SK-N-SH (cell line): ENCODE measurements at regions of chr21 and their contacts with region 1.

Region 1: GRCh38 chr21:33360881-33361602 is 36.3 kb downstream of the IFNAR1 start:
- DNase-seq: peak; percentile 71
- H3K4me3 ChIP-seq: peak overlapping the region; percentile 21 to 29; a peak in 2 of 4 replicates
- H3K27ac ChIP-seq: peak overlapping the region; percentile 56 to 87; a peak in 3 of 4 replicates
- H3K4me1 ChIP-seq: peaks cover 14% of the 10 kb centered on the region in 2 experiments; a peak in 3 of 4 replicates
- H3K27me3 ChIP-seq: no peaks in the 10 kb centered on the region
- CTCF ChIP-seq: peak; percentile 92
- EP300 ChIP-seq: peak in 1 of 2 experiments; percentile 22; a peak in 1 of 4 replicates
- RAD21 ChIP-seq: peak; percentile 63

Region 2: DNA sequence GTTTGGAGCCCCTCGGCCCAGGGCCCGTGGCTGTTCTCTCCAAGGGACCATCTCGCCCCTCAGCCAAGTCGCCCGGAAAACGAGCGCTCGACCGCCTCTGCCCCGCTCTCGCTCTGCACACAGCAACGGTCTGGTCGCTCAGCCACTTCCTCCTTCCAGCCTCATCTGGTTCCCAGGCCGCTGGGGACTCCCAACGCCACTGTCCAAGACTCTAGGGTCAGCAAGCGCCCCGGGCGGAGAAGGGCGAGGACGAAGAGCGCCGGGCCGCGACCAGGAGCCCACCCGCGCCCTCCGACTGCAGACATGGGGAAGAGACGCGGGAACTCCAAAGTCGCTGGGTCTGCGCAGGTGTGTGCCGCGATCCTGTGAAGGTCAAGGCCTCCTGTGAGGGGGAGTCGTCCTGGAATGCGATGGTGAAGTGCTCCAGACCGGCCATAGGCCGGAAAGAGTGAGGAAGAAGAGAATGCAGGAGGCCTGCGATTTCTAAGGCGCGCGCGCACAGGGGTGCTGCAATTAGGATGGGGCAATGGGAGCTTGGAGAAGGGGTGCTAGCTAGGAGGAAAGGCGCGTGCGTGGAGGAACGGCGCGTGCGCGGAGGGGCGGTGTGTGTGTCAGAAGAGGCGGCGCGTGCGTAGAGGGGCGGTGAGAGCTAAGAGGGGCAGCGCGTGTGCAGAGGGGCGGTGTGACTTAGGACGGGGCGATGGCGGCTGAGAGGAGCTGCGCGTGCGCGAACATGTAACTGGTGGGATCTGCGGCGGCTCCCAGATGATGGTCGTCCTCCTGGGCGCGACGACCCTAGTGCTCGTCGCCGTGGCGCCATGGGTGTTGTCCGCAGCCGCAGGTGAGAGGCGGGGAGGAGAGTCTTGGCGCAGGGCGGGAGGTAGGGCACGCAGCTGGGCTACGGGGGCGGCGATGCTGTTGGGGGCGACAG is 36.5 kb before region 1 on chr21 and contains the start of gene IFNAR1:
- CTCF ChIA-PET with region 1: interaction called, 14 read pairs
- POLR2A ChIA-PET with region 1: interaction called, 4 read pairs
- DNase-seq: peak; percentile 99
- H3K4me3 ChIP-seq: peak within 1 kb of the TSS; percentile 68 to 97
- H3K27ac ChIP-seq: peak within 1 kb of the TSS; percentile 87 to 90
- H3K4me1 ChIP-seq: peaks cover 3 to 12% of the 10 kb centered on the region in 2 experiments; a peak in 1 of 4 replicates
- H3K27me3 ChIP-seq: no peaks in the 10 kb centered on the region
- CTCF ChIP-seq: peak; percentile 14; the same call in 1 of the 2 replicates
- EP300 ChIP-seq: no peak
- RAD21 ChIP-seq: peak; percentile 4; the same call in 1 of the 2 replicates
- polyA plus RNA-seq, gene IFNAR1: 7.9 and 12.2 TPM in 2 replicates

Region 3: DNA sequence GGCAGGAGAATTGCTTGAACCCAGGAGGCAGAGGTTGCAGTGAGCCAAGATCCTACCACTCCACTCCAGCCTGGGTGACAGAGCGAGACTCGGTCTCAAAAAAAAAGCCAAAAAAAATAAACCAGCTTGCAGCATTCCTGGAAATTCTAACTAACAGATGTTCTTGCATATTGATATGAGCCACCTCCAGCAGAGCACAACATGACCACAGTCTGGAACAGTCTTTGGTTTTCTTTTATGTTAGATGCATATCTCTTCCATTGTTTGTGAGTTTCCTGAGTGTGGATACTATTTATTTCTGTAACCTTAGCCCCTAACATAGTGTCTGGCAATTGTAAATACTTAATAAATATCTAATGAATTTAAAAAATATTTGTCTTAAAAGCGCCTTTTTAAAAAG is 12.3 kb before region 1 on chr21:
- CTCF ChIA-PET with region 1: interaction called, 64 read pairs
- POLR2A ChIA-PET with region 1: no interaction called
- DNase-seq: no peak
- H3K4me3 ChIP-seq: no peak overlapping the region
- H3K27ac ChIP-seq: no peak overlapping the region
- H3K4me1 ChIP-seq: no peaks in the 10 kb centered on the region
- H3K27me3 ChIP-seq: no peaks in the 10 kb centered on the region
- CTCF ChIP-seq: no peak
- EP300 ChIP-seq: no peak
- RAD21 ChIP-seq: no peak

Region 4: GRCh38 chr21:33394260-33394659 is 33.2 kb after region 1 on chr21:
- CTCF ChIA-PET with region 1: interaction called, 19 read pairs
- POLR2A ChIA-PET with region 1: no interaction called
- DNase-seq: no peak
- H3K4me3 ChIP-seq: no peak overlapping the region
- H3K27ac ChIP-seq: no peak overlapping the region
- H3K4me1 ChIP-seq: peaks cover 0 to 15% of the 10 kb centered on the region in 2 experiments; a peak in 2 of 4 replicates
- H3K27me3 ChIP-seq: no peaks in the 10 kb centered on the region
- CTCF ChIP-seq: no peak
- EP300 ChIP-seq: no peak
- RAD21 ChIP-seq: no peak

Region 5: DNA sequence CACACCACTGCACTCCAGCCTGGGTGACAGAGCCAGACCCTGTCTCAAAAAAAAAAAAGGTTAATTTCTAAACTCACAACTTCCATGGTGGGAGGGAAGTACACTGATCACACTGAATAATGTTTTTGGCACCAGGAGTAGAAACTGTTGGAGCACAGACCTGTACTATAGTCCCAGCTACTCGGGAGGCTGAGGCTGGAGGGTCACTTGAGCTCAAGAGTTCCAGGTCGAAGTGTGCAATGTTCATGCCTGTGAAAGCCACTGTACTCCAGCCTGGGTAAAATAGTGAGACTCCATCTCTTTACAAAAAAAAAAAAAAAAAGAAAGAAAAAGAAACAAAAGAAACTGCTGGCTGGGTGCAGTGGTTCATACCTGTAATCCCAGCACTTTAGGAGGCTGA is 83.5 kb after region 1 on chr21:
- CTCF ChIA-PET with region 1: interaction called, 22 read pairs
- POLR2A ChIA-PET with region 1: no interaction called
- DNase-seq: no peak
- H3K4me3 ChIP-seq: no peak overlapping the region
- H3K27ac ChIP-seq: no peak overlapping the region
- H3K4me1 ChIP-seq: no peaks in the 10 kb centered on the region; a peak in 1 of 4 replicates
- H3K27me3 ChIP-seq: no peaks in the 10 kb centered on the region
- CTCF ChIP-seq: no peak
- EP300 ChIP-seq: no peak
- RAD21 ChIP-seq: no peak